Activated CD8-positive, alpha-beta T cell treated with anti-CD3 and anti-CD28 coated beads, Interleukin-2, amount 10 ng/mL, durations not matched to agents 7 days and 5 days (primary cell): ENCODE measurements at regions of chr3 and their contacts with region 1.

Region 1: DNA sequence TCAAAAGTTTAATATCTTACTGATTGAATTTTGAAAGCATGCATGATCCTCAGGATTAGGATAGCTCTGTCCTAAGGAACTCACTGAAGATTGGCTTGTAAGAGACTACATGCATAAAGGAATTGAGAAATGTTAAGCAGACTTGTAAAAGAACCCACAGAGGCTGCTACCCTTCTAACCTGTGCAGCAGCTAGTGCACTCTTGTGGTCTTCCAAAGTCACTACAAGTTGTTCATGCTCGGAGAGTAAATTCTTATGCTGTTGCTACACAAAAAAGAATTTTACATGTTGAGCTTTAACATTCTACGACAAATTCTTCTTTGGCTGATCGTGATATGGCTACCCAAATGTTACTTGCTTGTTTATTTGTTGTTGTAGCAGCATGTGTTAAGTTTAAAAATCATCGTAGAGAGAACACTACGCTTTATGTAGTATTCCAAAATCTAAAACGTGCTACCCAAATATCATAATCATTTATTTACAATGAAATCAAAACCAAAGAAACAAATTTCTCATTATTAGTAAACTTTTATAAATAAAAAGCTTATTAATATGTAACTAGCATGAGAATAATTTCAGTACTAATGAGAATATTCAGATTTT is 55.0 kb downstream of the GOLIM4 start:
- DNase-seq: peak; percentile 38
- ATAC-seq: peak; percentile 63
- H3K4me3 Mint-ChIP-seq: no peak overlapping the region
- H3K27ac Mint-ChIP-seq: no peak overlapping the region
- H3K4me1 Mint-ChIP-seq: no peaks in the 10 kb centered on the region
- H3K27me3 Mint-ChIP-seq: no peaks in the 10 kb centered on the region

Region 2: DNA sequence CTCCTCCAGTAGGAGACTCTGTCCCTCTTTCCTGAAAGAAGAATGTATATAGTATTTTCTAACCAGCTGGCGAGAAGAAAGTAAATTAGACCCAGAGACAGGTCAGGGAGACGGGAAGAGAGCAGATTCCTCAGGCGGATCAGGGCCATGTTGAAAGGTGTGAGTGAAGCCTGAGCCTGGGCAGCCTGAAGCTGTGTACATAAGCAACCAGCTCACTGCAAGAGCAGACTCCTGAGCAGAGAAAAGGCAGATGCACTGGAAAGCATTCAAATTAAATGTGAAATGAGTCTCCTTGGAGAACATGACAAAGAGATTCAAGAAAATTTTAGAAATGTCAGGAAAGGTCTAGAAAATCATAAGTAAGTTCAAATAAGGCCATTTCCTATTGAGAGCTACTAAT is 110.7 kb before region 1 on chr3:
- CTCF ChIA-PET with region 1: interaction called, 40 read pairs
- POLR2A ChIA-PET with region 1: no interaction called
- DNase-seq: no peak
- ATAC-seq: no peak
- H3K4me3 Mint-ChIP-seq: no peak overlapping the region
- H3K27ac Mint-ChIP-seq: no peak overlapping the region
- H3K4me1 Mint-ChIP-seq: no peaks in the 10 kb centered on the region
- H3K27me3 Mint-ChIP-seq: peaks cover 4% of the 10 kb centered on the region

Region 3: GRCh38 chr3:168025076-168025475 is 15.6 kb before region 1 on chr3:
- CTCF ChIA-PET with region 1: interaction called, 12 read pairs
- POLR2A ChIA-PET with region 1: no interaction called
- DNase-seq: no peak
- ATAC-seq: no peak
- H3K4me3 Mint-ChIP-seq: no peak overlapping the region
- H3K27ac Mint-ChIP-seq: no peak overlapping the region
- H3K4me1 Mint-ChIP-seq: peaks cover 56% of the 10 kb centered on the region
- H3K27me3 Mint-ChIP-seq: no peaks in the 10 kb centered on the region

Region 4: DNA sequence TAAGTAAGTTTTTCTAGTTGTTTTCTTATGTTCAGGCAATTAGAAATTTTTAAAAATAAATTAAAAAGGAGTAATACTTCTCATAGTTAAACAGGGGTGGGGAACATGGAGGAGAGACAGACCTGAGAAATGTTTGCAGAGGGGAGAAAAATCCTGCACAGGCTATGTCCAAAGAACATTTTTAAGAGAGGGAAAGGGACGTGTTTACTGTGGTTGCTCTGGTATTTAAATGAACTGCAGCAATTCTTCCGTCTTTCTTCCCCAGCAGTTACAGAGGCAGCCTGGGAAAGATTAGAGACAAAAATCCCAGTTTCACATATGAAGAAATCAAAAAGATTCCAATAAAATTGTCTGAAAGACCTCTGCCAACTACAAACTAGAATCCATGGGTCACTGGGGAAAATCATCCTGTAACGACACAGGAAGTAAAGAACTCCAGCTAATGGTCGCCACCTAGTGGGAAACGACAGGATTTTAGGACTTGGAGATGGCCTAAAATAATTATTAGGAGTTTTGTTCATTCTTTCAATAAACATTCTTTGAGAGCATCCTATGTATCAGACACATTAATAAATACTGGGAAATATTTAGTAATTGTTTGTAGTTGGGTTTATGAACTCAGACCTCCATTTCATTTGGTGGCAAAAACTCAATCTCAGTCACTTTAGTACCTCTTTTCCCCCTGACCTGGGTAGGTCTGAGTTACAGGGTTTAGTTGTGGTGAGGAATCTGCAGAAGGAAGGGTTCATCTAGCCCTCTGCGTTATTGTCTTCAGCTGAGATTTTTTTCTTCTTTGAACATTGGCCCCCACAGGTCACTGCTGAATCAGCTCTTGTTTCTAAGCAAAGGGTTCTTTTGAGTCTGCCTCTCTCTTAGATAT is 124.9 kb after region 1 on chr3:
- CTCF ChIA-PET with region 1: interaction called, 62 read pairs
- POLR2A ChIA-PET with region 1: no interaction called
- DNase-seq: peak; percentile 59
- ATAC-seq: peak; percentile 70
- H3K4me3 Mint-ChIP-seq: no peak overlapping the region
- H3K27ac Mint-ChIP-seq: no peak overlapping the region
- H3K4me1 Mint-ChIP-seq: peaks cover 3% of the 10 kb centered on the region
- H3K27me3 Mint-ChIP-seq: peaks cover 3% of the 10 kb centered on the region